Heart right ventricle (tissue), 16 donors: ENCODE measurements at regions of chr7 and their contacts with region 1.

Region 1: DNA sequence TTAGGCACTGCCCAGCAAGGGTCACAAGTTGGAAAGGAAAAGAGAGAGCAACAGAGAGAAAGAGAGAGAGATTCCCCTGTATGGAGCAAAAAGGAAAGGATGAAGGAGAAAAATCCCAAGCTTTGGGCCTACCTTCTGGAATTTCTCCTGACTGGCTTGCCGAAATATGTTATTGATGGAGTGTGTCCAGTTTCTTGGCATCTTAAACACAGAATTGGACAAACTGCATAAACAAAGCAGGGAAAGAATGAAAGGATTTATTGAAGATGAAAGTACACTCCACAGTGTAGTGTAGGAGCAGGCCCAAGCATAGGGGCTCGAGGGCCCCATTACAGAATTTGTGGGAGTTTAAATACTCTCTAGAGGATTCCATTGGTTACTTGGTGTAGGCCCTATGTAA is 627.8 kb upstream of the CNTNAP2 start:
- DNase-seq: no peak
- ATAC-seq: no peak
- H3K4me3 ChIP-seq: no peak overlapping the region
- H3K27ac ChIP-seq: no peak overlapping the region
- H3K4me1 ChIP-seq: no peaks in the 10 kb centered on the region
- H3K27me3 ChIP-seq: no peaks in the 10 kb centered on the region
- CTCF ChIP-seq: no peak

Region 2: GRCh38 chr7:145543242-145543641 is 54.4 kb after region 1 on chr7:
- intact Hi-C with region 1: loop called in 1 of 10 experiments (anchors 10 kb)
- DNase-seq: no peak
- ATAC-seq: no peak
- H3K4me3 ChIP-seq: no peak overlapping the region
- H3K27ac ChIP-seq: no peak overlapping the region
- H3K4me1 ChIP-seq: no peaks in the 10 kb centered on the region
- H3K27me3 ChIP-seq: no peaks in the 10 kb centered on the region
- CTCF ChIP-seq: no peak